ENCODE measurements at regions of chr3 and their contacts with region 1.

Region 1: GRCh38 chr3:108221911-108222852 is at the start of gene IFT57:
- DNase-seq: peak; percentile 98
- ATAC-seq: peak; percentile 96
- H3K4me3 ChIP-seq: peak within 1 kb of the TSS; percentile 84
- H3K27ac ChIP-seq: peak within 1 kb of the TSS; percentile 50
- H3K4me1 ChIP-seq: peaks cover 8% of the 10 kb centered on the region
- H3K27me3 ChIP-seq: no peaks in the 10 kb centered on the region
- CTCF ChIP-seq: no peak
- POLR2A ChIP-seq: peak; percentile 92
- RAD21 ChIP-seq: no peak
- total RNA-seq, gene IFT57: 35.3 and 46.9 TPM in 2 replicates

Region 2: GRCh38 chr3:108130701-108131474 is 91.3 kb before region 1 on chr3:
- CTCF ChIA-PET with region 1: no interaction called
- POLR2A ChIA-PET with region 1: interaction called, 4 read pairs
- dilution Hi-C with region 1: no loop called
- in situ Hi-C with region 1: no loop called
- intact Hi-C with region 1: loop called (anchors 5 kb)
- DNase-seq: peak; percentile 96
- ATAC-seq: peak; percentile 79
- H3K4me3 ChIP-seq: no peak overlapping the region
- H3K27ac ChIP-seq: peak overlapping the region; percentile 95; the same call in 1 of the 2 replicates
- H3K4me1 ChIP-seq: peaks cover 26% of the 10 kb centered on the region
- H3K27me3 ChIP-seq: no peaks in the 10 kb centered on the region
- CTCF ChIP-seq: no peak
- POLR2A ChIP-seq: no peak
- RAD21 ChIP-seq: no peak; the same call in 1 of the 2 replicates

Region 3: DNA sequence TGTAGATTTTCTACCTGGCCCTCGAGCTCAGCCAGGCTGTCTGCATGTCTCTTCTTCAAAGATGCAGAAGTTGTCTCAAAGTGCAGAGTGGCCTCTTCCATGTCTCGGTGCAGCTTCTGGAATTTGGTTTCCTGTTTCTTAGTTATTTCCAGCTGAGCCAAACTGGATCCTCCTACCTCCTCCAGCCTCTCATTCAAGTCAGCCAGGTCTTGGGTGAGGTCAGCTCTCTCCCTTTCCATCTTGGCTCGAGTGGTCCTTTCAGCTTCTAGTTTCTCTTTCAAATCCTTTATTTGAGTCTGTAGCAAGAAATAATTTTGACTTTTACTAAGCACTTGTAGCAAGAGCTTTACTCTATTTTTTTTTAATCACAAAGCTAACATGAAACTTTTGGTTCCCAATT is 206.4 kb after region 1 on chr3:
- CTCF ChIA-PET with region 1: no interaction called
- POLR2A ChIA-PET with region 1: no interaction called
- dilution Hi-C with region 1: no loop called
- in situ Hi-C with region 1: no loop called
- intact Hi-C with region 1: no loop called
- DNase-seq: no peak
- ATAC-seq: no peak
- H3K4me3 ChIP-seq: no peak overlapping the region
- H3K27ac ChIP-seq: no peak overlapping the region
- H3K4me1 ChIP-seq: no peaks in the 10 kb centered on the region
- H3K27me3 ChIP-seq: no peaks in the 10 kb centered on the region
- CTCF ChIP-seq: no peak
- POLR2A ChIP-seq: no peak
- RAD21 ChIP-seq: no peak

Region 4: GRCh38 chr3:108546247-108546646 is 324.1 kb after region 1 on chr3:
- CTCF ChIA-PET with region 1: no interaction called
- POLR2A ChIA-PET with region 1: no interaction called
- dilution Hi-C with region 1: no loop called
- in situ Hi-C with region 1: no loop called
- intact Hi-C with region 1: loop called (anchors 10 kb)
- DNase-seq: peak; percentile 4
- ATAC-seq: peak; percentile 40
- H3K4me3 ChIP-seq: no peak overlapping the region
- H3K27ac ChIP-seq: peak overlapping the region; percentile 37; the same call in 1 of the 2 replicates
- H3K4me1 ChIP-seq: no peaks in the 10 kb centered on the region
- H3K27me3 ChIP-seq: no peaks in the 10 kb centered on the region
- CTCF ChIP-seq: no peak
- POLR2A ChIP-seq: no peak
- RAD21 ChIP-seq: no peak

Measured in IMR-90 (cell line).